ENCODE measurements at regions of chr2 and their contacts with region 1.

Region 1: GRCh38 chr2:70789304-70790135 is 923 bp downstream of the FIGLA start:
- DNase-seq: peak; percentile 89
- H3K4me3 Mint-ChIP-seq: peak overlapping the region; percentile 74
- H3K27ac Mint-ChIP-seq: no peak overlapping the region
- H3K4me1 Mint-ChIP-seq: peaks cover 14% of the 10 kb centered on the region
- H3K27me3 Mint-ChIP-seq: peaks cover 40% of the 10 kb centered on the region

Region 2: GRCh38 chr2:70391988-70392387 is 397.5 kb before region 1 on chr2:
- CTCF ChIA-PET with region 1: no interaction called
- intact Hi-C with region 1: no loop called
- DNase-seq: no peak
- H3K4me3 Mint-ChIP-seq: no peak overlapping the region
- H3K27ac Mint-ChIP-seq: no peak overlapping the region
- H3K4me1 Mint-ChIP-seq: no peaks in the 10 kb centered on the region
- H3K27me3 Mint-ChIP-seq: no peaks in the 10 kb centered on the region

Region 3: DNA sequence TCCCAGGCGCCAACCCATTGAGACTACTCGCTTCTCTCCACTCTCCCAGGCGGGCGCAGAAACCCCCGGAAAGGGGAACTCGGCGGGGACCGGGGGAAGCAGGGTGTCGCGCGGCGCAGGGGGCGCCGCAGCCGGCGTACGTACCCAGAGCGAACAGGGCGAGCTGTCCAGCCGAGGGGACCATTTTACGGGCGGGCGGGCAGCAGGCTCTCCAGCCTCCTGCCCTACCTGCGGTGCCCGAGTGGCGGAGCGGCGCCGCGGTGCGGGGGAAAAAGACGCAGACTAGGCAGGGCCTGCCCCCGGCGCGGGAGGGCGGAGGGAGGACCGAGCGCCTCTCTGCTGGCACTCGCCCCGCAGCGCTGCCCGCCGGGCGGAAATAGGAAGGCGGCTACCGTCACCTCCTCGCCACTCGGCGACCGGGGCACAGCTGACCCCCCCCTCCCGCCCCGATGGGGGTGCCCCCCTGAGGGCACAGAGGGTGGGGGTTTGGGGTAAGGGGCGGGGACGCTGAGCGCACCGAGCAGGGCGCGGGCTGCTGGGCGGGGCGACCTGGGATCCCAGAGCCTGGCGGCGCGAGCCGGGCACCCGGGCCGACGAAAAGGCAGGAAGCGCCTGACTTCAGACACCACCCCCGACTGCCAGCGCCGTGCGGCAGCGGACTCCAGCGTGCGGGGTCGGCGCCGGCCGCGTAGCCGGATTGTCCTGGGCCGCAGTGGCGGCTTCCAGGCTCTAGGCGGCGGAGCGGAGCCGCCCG is 235.8 kb before region 1 on chr2 and contains the start of gene TGFA:
- CTCF ChIA-PET with region 1: no interaction called
- intact Hi-C with region 1: loop called (anchors 5 kb)
- DNase-seq: peak; percentile 77
- H3K4me3 Mint-ChIP-seq: peak within 1 kb of the TSS; percentile 78
- H3K27ac Mint-ChIP-seq: peak within 1 kb of the TSS; percentile 23
- H3K4me1 Mint-ChIP-seq: peaks cover 14% of the 10 kb centered on the region
- H3K27me3 Mint-ChIP-seq: peaks cover 11% of the 10 kb centered on the region
- total RNA-seq, gene TGFA: 0.33 to 0.64 TPM

Region 4: DNA sequence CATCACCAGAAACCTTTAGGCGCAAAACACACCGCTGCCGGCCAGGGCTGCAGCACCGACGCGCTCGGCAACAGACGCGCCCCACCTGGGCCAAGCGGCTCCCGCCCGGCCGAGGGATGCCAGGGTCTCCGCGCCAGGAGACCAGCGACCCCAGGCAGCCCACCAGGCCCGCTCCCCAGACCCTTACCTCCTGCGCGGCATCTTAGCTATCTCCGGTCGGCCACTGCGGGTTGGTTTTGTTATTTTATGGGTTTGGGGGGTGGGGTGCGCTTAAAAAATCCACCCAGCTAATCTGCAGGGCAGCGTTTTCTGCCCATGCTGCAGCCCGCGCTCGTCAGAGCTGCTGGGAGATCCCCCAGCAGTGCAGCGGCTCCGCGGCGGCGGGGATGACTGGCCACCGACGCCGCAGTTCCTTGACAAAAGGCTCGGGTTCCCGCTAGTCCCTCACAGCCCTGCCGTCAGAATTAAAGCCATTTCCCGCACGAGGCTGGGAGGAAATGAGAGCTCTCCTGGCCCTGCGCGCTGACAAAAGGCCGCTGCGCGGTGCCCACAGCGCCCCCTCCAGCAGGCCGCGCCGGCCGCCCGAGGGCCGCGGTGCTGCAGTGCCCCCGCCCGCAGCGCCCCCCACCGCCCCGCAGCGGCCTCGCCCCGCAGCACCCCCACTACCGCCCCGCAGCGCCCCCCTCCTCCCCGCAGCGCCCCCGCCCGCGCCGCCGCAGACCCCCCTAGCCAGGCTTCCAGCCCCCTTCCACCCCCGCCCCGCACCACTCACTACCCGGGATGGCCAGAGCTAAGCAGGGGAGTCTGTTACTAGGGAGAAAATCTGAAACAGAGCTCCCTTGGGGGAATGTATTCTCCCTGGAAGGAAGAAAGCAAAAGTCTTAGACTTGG is 21.6 kb before region 1 on chr2 and contains the start of gene ADD2:
- CTCF ChIA-PET with region 1: interaction called, 17 read pairs
- intact Hi-C with region 1: loop called (anchors 1 kb)
- DNase-seq: peak; percentile 89
- H3K4me3 Mint-ChIP-seq: peak within 1 kb of the TSS; percentile 91
- H3K27ac Mint-ChIP-seq: peak within 1 kb of the TSS; percentile 83
- H3K4me1 Mint-ChIP-seq: peaks cover 8% of the 10 kb centered on the region
- H3K27me3 Mint-ChIP-seq: peaks cover 10% of the 10 kb centered on the region
- total RNA-seq, gene ADD2: 42.9 to 46.2 TPM

Region 5: GRCh38 chr2:70861777-70862625 is 72.5 kb after region 1 on chr2:
- CTCF ChIA-PET with region 1: interaction called, 12 read pairs
- intact Hi-C with region 1: loop called (anchors 1 kb)
- DNase-seq: peak; percentile 87
- H3K4me3 Mint-ChIP-seq: no peak overlapping the region
- H3K27ac Mint-ChIP-seq: no peak overlapping the region
- H3K4me1 Mint-ChIP-seq: peaks cover 2% of the 10 kb centered on the region
- H3K27me3 Mint-ChIP-seq: peaks cover 12% of the 10 kb centered on the region

Region 6: GRCh38 chr2:70919672-70920366 is 130.3 kb after region 1 on chr2:
- CTCF ChIA-PET with region 1: interaction called, 39 read pairs
- intact Hi-C with region 1: loop called (anchors 1 kb)
- DNase-seq: peak; percentile 85
- H3K4me3 Mint-ChIP-seq: no peak overlapping the region
- H3K27ac Mint-ChIP-seq: no peak overlapping the region
- H3K4me1 Mint-ChIP-seq: no peaks in the 10 kb centered on the region
- H3K27me3 Mint-ChIP-seq: peaks cover 22% of the 10 kb centered on the region

Measured in activated naive CD4-positive, alpha-beta T cell treated with anti-CD3 and anti-CD28 coated beads for 36 hours (primary cell).